ENCODE measurements at regions of chr9 and their contacts with region 1.

Region 1: GRCh38 chr9:109440797-109441287 is 57.3 kb downstream of the PTPN3 start:
- DNase-seq: peak; percentile 94
- H3K27ac ChIP-seq: no peak overlapping the region
- CTCF ChIP-seq: peak; percentile 96

Region 2: DNA sequence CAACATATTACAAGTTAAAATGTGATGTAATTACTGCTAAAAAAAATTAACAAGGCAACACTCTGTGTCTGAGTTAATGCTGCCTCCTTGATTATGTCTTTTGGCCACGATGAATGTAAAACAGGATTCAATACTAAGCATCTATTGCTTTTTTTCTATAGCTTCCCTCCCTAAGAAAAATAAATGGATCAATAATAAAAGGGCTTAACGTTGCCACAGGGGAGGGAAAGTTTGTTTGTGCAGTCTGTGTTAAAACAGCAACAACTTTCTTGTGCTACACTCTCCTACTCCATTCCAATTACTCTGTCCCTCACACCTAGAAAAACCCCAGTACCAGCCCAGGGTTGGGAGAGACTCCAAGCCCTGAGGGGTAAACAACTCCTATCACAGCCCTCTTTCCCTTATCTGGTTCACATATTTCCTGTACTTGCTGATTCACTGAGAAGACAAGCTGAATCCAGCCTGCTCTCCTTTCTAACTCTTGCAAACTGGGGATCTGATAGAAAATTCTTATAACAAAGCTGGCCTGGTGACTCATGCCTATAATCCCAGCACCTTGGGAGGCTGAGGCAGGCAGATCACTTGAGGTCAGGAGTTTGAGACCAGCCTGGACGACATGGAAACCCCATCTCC is 12.5 kb after region 1 on chr9:
- CTCF ChIA-PET with region 1: interaction called, 19 read pairs
- POLR2A ChIA-PET with region 1: no interaction called
- DNase-seq: peak; percentile 95
- H3K27ac ChIP-seq: peak overlapping the region; percentile 86
- CTCF ChIP-seq: no peak

Region 3: DNA sequence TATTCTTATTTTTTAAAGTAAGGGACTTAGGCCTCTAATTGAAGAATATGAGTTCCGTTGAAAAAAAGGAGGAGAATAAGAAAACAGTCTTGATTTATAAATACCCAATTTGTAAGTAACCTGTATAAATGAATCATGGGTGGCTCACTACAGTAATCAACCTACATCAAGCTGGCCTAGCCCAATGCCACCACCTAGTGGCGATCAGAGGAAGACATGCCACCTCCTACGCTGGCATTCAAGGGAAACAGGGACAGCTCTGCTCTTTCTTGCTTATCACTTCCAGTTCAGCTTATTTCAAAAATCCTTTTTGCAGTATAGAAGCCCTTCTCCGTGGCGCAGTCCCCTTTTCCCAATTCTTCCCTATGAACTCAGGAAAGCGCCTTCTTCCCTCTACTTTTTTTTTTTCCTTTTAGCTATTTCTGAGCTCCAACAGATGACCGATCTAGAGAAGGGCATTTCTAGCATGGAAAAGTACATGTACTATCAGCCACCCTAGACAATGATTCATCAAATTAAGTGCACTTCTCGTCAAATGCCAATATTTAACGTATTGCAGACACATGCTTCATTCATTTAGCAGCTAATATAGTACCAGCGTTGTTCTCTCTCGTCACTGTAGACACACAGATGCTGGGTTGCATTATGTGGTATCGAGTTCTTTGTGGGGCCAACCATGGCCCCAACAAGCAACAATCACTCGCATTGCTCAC is 29.0 kb after region 1 on chr9:
- CTCF ChIA-PET with region 1: interaction called, 129 read pairs
- POLR2A ChIA-PET with region 1: no interaction called
- DNase-seq: peak; percentile 92
- H3K27ac ChIP-seq: no peak overlapping the region
- CTCF ChIP-seq: peak; percentile 99

Region 4: GRCh38 chr9:109498195-109499092 is 57.6 kb after region 1 on chr9 and contains the start of gene PTPN3:
- CTCF ChIA-PET with region 1: interaction called, 10 read pairs
- POLR2A ChIA-PET with region 1: no interaction called
- DNase-seq: peak; percentile 78
- H3K27ac ChIP-seq: peak within 1 kb of the TSS; percentile 79
- CTCF ChIP-seq: no peak

Region 5: DNA sequence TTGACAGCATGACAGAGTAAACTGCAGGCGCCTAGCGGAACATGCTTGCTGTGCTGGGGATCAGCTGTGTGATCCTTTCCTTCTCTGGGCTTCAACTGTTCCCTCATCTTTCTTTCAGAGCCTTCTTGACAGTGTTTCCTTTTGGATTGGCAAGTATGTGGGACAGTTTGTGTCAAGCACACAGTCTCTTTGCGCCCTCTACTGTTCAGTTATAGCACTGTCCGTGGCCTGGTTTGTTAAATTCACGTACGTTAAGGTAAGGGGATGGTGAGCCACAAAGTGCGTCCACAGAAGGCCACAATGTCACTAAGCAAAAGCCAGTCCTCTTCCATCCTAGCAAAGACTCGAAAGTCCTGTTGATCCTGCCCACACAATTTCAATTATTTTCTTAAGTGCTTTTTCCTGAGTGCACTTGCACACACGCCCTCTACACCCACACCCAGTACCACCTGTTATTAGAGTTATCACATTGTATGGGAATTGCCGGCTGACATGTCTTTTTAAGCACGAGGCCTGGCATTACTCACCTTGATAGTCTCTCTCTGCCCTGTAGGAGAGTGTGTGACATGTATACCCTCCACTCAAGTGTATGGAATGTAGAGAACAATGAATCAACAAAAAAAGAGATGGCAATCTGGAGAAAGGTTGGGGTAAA is 79.8 kb after region 1 on chr9:
- CTCF ChIA-PET with region 1: interaction called, 23 read pairs
- POLR2A ChIA-PET with region 1: no interaction called
- DNase-seq: peak; percentile 92
- H3K27ac ChIP-seq: no peak overlapping the region
- CTCF ChIP-seq: peak; percentile 100

Region 6: GRCh38 chr9:109926421-109926869 is 485.6 kb after region 1 on chr9:
- CTCF ChIA-PET with region 1: no interaction called
- POLR2A ChIA-PET with region 1: no interaction called
- DNase-seq: no peak
- H3K27ac ChIP-seq: no peak overlapping the region
- CTCF ChIP-seq: no peak

Measured in RWPE1 (cell line).